OCI-LY7 (cell line): ENCODE measurements at regions of chr3 and their contacts with region 1.

Region 1: GRCh38 chr3:30644593-30645012 is 38.2 kb downstream of the TGFBR2 start:
- DNase-seq: peak; percentile 82
- H3K4me3 ChIP-seq: peak overlapping the region; percentile 45
- H3K27ac ChIP-seq: peak overlapping the region; percentile 94
- H3K4me1 ChIP-seq: peaks cover 99% of the 10 kb centered on the region
- CTCF ChIP-seq: no peak

Region 2: GRCh38 chr3:30606301-30607031 is 38.1 kb before region 1 on chr3 and contains the start of gene TGFBR2:
- CTCF ChIA-PET with region 1: interaction called, 3 read pairs
- POLR2A ChIA-PET with region 1: interaction called, 45 read pairs
- intact Hi-C with region 1: loop called (anchors 1 kb)
- DNase-seq: peak; percentile 91
- H3K4me3 ChIP-seq: peak within 1 kb of the TSS; percentile 94
- H3K27ac ChIP-seq: peak within 1 kb of the TSS; percentile 93
- H3K4me1 ChIP-seq: peaks cover 72% of the 10 kb centered on the region
- CTCF ChIP-seq: no peak; the same call in 1 of the 2 replicates
- total RNA-seq, gene TGFBR2: 28.1 and 29.6 TPM in 2 replicates

Region 3: DNA sequence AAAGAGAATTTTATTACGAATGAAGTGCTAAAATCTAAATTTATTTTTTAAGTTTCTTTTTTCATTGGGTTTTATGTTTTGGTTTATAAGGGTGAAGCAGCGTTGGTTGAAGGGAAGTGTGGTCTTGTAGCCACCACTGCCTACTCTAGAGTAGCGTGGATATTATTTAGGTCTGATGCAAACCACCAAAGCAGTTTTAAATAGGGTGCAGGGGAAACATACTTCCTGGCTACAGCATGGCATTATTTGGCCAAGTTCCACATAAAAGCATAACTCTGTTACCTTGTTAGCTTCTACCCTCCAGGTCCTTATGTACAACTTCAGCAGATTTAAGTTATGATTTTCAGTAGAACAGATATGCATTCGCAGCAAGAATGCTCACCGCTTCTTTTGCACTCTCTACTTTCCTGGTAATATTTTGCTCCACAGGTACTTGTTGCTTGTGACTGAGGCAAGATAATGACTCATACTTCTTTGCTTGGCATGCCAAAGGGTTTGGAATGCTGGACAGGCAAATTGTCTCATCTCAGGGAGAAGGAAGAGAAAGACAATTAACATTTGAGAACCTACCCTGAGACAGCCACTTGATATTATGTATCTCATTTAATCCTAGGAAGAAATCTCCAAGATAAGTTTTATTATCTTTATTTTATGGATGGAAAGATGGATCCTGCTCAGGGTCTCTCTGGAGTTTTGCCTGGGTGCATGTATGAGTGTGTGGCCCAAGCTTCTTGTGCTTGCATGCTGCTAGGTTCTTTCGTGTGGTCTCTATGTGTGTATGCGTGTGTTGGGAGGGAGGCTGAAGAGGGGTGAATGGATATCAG is 32.8 kb before region 1 on chr3:
- CTCF ChIA-PET with region 1: interaction called, 3 read pairs
- POLR2A ChIA-PET with region 1: interaction called, 45 read pairs
- intact Hi-C with region 1: no loop called
- DNase-seq: peak; percentile 56
- H3K4me3 ChIP-seq: peak overlapping the region; percentile 94
- H3K27ac ChIP-seq: peak overlapping the region; percentile 69
- H3K4me1 ChIP-seq: peaks cover 77% of the 10 kb centered on the region
- CTCF ChIP-seq: no peak

Region 4: DNA sequence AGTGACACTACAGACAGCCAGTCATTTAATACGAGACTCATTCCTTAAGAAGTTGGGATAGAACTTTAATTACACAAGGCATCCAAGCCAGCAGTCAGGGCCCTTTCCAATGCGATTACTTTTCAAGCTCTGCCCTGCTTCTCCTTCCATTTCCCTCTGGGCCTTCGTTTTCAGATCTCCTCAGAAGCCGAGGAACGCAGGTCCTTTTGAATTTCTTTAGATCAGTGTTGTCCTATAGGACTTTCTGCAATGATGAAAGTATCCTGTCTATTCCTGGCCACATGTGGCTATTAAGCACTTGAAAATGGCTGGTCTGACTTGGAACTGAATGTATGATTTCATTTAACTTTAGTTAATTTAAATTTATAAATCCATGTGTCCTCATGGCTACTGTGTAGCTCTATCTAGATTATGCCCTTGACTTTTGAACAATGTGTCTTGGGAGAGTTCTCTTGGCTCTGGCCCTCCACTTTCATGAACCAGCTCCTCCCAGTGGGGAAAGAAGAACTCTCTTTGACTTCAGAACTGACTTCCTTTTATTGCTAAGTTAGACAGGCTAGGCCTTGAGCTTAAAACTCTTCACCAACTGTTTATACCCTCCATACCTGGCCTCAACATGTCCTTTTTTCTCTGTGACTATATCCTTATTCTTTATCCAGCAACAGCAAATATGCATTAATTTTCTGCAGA is 15.6 kb before region 1 on chr3:
- CTCF ChIA-PET with region 1: no interaction called
- POLR2A ChIA-PET with region 1: interaction called, 35 read pairs
- intact Hi-C with region 1: no loop called
- DNase-seq: peak; percentile 75
- H3K4me3 ChIP-seq: peak overlapping the region; percentile 37
- H3K27ac ChIP-seq: peak overlapping the region; percentile 81
- H3K4me1 ChIP-seq: peaks cover 99% of the 10 kb centered on the region
- CTCF ChIP-seq: peak; percentile 81

Region 5: DNA sequence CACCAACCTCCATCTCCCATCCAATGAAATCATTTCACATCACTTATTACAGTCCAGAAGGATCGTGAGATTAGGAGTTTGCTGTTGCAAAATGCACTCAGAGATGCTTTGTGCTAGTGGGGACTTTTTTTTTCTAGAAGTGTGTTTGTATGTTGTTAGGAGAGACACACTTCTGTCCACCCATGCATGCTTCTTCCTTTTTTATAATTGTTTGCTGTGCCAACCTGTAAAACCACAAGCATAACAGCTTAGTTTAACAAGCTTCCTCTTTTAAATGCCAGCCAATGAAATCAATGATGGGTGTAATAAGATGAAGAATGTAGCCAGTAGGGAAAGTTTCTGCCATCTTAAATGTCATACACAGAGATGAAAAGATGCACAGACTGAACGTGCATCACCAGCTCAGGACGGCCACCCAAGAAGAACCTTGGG is 582.5 kb after region 1 on chr3:
- CTCF ChIA-PET with region 1: no interaction called
- POLR2A ChIA-PET with region 1: no interaction called
- intact Hi-C with region 1: loop called (anchors 10 kb)
- DNase-seq: peak; percentile 96
- H3K4me3 ChIP-seq: peak overlapping the region; percentile 57
- H3K27ac ChIP-seq: peak overlapping the region; percentile 100
- H3K4me1 ChIP-seq: peaks cover 98% of the 10 kb centered on the region
- CTCF ChIP-seq: no peak

Region 6: DNA sequence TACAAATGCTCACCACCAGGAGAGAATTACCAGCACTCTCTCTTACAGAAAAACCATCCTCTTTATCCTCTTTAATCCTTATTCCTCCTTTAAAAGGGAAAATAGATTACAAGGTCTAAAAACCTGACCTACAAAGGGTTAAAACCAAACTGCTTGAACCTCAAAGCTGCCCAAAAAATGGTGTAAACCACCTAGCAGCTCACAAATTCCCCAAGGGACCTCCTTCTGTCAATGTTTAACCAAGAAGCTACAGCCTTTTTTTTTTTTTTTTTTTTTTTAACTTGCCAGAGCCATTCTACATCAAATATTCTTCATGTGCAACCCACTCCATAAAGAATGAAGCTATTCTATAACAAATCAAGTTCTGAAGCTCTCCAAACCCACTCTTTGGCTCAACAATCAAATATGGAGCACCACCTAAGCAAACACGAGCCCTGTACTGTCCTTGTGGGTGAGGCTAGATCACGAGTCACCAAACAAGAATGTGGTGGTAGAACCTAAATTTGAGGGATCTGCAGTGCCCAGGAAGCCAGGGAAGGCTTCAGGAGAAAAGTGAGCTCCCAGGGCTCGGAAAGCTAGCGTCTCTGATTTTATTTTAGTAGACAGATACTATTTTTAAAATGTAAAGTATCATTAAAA is 1316.3 kb after region 1 on chr3:
- CTCF ChIA-PET with region 1: no interaction called
- POLR2A ChIA-PET with region 1: no interaction called
- intact Hi-C with region 1: loop called (anchors 10 kb)
- DNase-seq: peak; percentile 85
- H3K4me3 ChIP-seq: peak overlapping the region; percentile 65
- H3K27ac ChIP-seq: peak overlapping the region; percentile 91
- H3K4me1 ChIP-seq: peaks cover 82% of the 10 kb centered on the region
- CTCF ChIP-seq: no peak